Heart right ventricle (tissue), 16 donors: ENCODE measurements at regions of chr20 and their contacts with region 1.

Region 1: GRCh38 chr20:39049684-39050554 is 87.8 kb downstream of the DHX35 start:
- DNase-seq: peak; percentile 72 to 85
- ATAC-seq: peak; percentile 84 to 92 (median 88)
- H3K4me3 ChIP-seq: peak overlapping the region; percentile 19 to 80 (median 68)
- H3K27ac ChIP-seq: peak overlapping the region in 8 of 10 donors; percentile 12 to 71 (median 28)
- H3K4me1 ChIP-seq: peaks cover 0 to 16% (median 7%) of the 10 kb centered on the region in 9 donors
- H3K27me3 ChIP-seq: peaks cover 0 to 14% (median 0%) of the 10 kb centered on the region in 7 donors
- CTCF ChIP-seq: peak; percentile 95 to 100 (median 99)

Region 2: GRCh38 chr20:38926142-38926933 is 123.6 kb before region 1 on chr20 and contains the start of gene FAM83D:
- intact Hi-C with region 1: loop called in 9 of 10 experiments (anchors 1 to 10 kb)
- DNase-seq: peak; percentile 92 to 94
- ATAC-seq: peak; percentile 96 to 99 (median 97)
- H3K4me3 ChIP-seq: peak within 1 kb of the TSS; percentile 33 to 74 (median 64)
- H3K27ac ChIP-seq: peak within 1 kb of the TSS in 2 of 10 donors; percentile 30 to 69
- H3K4me1 ChIP-seq: peaks cover 0 to 30% (median 17%) of the 10 kb centered on the region in 9 donors
- H3K27me3 ChIP-seq: peaks cover 0 to 6% (median 0%) of the 10 kb centered on the region in 7 donors
- CTCF ChIP-seq: peak in 4 of 9 donors; percentile 1 to 96 (median 40)
- total RNA-seq, gene FAM83D: 0.12 to 2.8 (median 0.46) TPM

Region 3: GRCh38 chr20:39081255-39081654 is 31.3 kb after region 1 on chr20:
- intact Hi-C with region 1: loop called in 6 of 10 experiments (anchors 1 to 2 kb)
- DNase-seq: peak; percentile 59 to 76
- ATAC-seq: peak in 7 of 8 donors; percentile 52 to 80 (median 75)
- H3K4me3 ChIP-seq: no peak overlapping the region
- H3K27ac ChIP-seq: no peak overlapping the region
- H3K4me1 ChIP-seq: no peaks in the 10 kb centered on the region
- H3K27me3 ChIP-seq: peaks cover 0 to 26% (median 20%) of the 10 kb centered on the region in 7 donors
- CTCF ChIP-seq: peak; percentile 82 to 96 (median 92)